ENCODE measurements at regions of chr18 and their contacts with region 1.

Region 1: GRCh38 chr18:59070181-59070912 is 69.3 kb upstream of the SEC11C start:
- DNase-seq: peak; percentile 84
- H3K4me3 Mint-ChIP-seq: no peak overlapping the region
- H3K27ac Mint-ChIP-seq: no peak overlapping the region
- H3K4me1 Mint-ChIP-seq: no peaks in the 10 kb centered on the region
- H3K27me3 Mint-ChIP-seq: no peaks in the 10 kb centered on the region
- CTCF ChIP-seq: peak; percentile 76

Region 2: GRCh38 chr18:58529714-58530354 is 540.5 kb before region 1 on chr18:
- CTCF ChIA-PET with region 1: no interaction called
- POLR2A ChIA-PET with region 1: no interaction called
- intact Hi-C with region 1: loop called (anchors 10 kb)
- DNase-seq: peak; percentile 70
- H3K4me3 Mint-ChIP-seq: no peak overlapping the region
- H3K27ac Mint-ChIP-seq: no peak overlapping the region
- H3K4me1 Mint-ChIP-seq: no peaks in the 10 kb centered on the region
- H3K27me3 Mint-ChIP-seq: no peaks in the 10 kb centered on the region
- CTCF ChIP-seq: peak; percentile 91

Region 3: DNA sequence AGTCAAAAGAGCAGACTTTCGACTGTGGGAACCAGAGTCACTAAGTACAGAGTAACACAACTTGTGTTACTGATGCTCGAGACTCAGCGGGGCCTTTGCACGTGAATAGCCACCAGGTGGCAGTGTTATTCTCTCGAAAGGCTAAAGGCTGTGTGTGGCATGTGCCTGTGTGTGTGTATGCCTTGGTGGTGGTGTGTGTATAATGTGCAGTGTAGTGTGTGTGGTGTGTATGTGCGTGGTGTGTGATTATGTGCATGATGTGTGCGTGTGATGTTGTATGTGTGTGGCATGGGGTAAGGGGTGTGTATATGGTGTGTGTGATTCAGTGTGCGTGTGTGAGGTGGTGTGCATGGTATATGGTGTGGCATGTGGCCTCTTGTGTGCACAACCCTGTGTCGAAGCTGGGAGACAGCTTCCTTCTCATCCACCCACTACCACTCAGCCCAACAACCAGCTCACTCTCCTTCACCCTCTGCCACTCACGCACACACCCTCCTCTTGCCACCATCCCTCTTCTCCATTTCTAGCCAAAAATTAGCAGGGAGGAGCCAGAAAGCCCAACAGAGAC is 288.6 kb before region 1 on chr18:
- CTCF ChIA-PET with region 1: interaction called, 235 read pairs
- POLR2A ChIA-PET with region 1: interaction called, 5 read pairs
- intact Hi-C with region 1: loop called (anchors 1 kb)
- DNase-seq: peak; percentile 84
- H3K4me3 Mint-ChIP-seq: no peak overlapping the region
- H3K27ac Mint-ChIP-seq: no peak overlapping the region
- H3K4me1 Mint-ChIP-seq: peaks cover 24% of the 10 kb centered on the region
- H3K27me3 Mint-ChIP-seq: no peaks in the 10 kb centered on the region
- CTCF ChIP-seq: peak; percentile 87

Region 4: DNA sequence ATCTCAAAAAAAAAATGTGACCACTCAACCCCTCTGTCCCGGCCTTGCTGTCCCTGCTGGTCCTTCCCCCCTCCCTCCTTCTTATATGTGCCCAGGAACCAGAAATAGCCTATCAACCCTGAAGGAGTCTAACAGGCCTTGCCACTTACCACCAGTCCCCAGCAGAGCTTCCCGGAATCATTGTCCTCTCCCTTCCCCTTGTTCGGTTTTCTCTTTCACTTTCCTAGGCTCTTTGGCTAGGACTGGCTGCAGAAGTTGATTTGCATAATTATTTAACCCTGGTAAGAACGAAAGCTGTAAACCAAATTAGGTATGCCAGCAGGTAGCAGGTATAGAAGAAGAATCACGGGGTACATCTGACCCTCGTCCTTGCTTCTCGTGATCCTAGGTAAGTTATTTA is 278.3 kb before region 1 on chr18:
- CTCF ChIA-PET with region 1: interaction called, 13 read pairs
- POLR2A ChIA-PET with region 1: interaction called, 4 read pairs
- intact Hi-C with region 1: no loop called
- DNase-seq: no peak
- H3K4me3 Mint-ChIP-seq: no peak overlapping the region
- H3K27ac Mint-ChIP-seq: no peak overlapping the region
- H3K4me1 Mint-ChIP-seq: peaks cover 21% of the 10 kb centered on the region
- H3K27me3 Mint-ChIP-seq: no peaks in the 10 kb centered on the region
- CTCF ChIP-seq: no peak

Region 5: GRCh38 chr18:59085797-59086196 is 15.4 kb after region 1 on chr18:
- CTCF ChIA-PET with region 1: interaction called, 20 read pairs
- POLR2A ChIA-PET with region 1: no interaction called
- intact Hi-C with region 1: no loop called
- DNase-seq: no peak
- H3K4me3 Mint-ChIP-seq: no peak overlapping the region
- H3K27ac Mint-ChIP-seq: no peak overlapping the region
- H3K4me1 Mint-ChIP-seq: peaks cover 5% of the 10 kb centered on the region
- H3K27me3 Mint-ChIP-seq: peaks cover 70% of the 10 kb centered on the region
- CTCF ChIP-seq: no peak